ENCODE measurements at regions of chr17 and their contacts with region 1.

Region 1: DNA sequence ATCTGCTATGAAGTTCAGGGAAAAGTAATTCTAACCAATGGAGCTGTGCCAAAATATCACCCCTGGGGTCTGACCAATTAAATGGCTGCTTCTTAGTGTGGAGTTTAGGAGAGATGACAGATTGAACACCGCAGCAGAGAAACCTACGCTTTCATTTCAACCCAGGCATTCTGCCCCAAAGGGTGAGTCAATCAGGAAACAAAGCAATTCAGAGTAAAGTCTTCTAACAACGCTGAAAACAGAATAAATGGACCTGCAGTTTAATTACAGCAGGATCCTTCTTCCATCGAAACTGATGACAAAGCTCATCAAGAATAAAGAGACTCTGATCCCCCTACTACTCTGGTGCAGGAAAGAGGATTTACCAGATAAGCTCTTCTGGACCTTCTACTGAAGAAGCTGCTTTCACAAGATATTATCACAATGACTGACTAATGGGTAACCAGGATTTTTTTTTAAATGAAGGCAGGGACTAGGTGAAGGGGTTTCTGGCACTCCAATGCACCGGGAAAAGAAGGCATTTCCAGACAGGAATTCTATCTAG is 16.7 kb downstream of the RFFL start:
- DNase-seq: peak; percentile 82
- H3K4me3 Mint-ChIP-seq: peak overlapping the region; percentile 72
- H3K27ac Mint-ChIP-seq: peak overlapping the region; percentile 94
- H3K4me1 Mint-ChIP-seq: peaks cover 69% of the 10 kb centered on the region
- H3K27me3 Mint-ChIP-seq: no peaks in the 10 kb centered on the region

Region 2: GRCh38 chr17:35022536-35023063 is 24.2 kb before region 1 on chr17:
- CTCF ChIA-PET with region 1: interaction called, 7 read pairs
- POLR2A ChIA-PET with region 1: interaction called, 23 read pairs
- intact Hi-C with region 1: loop called (anchors 1 kb)
- DNase-seq: peak; percentile 90
- H3K4me3 Mint-ChIP-seq: peak overlapping the region; percentile 81
- H3K27ac Mint-ChIP-seq: peak overlapping the region; percentile 100
- H3K4me1 Mint-ChIP-seq: peaks cover 46% of the 10 kb centered on the region
- H3K27me3 Mint-ChIP-seq: no peaks in the 10 kb centered on the region

Region 3: DNA sequence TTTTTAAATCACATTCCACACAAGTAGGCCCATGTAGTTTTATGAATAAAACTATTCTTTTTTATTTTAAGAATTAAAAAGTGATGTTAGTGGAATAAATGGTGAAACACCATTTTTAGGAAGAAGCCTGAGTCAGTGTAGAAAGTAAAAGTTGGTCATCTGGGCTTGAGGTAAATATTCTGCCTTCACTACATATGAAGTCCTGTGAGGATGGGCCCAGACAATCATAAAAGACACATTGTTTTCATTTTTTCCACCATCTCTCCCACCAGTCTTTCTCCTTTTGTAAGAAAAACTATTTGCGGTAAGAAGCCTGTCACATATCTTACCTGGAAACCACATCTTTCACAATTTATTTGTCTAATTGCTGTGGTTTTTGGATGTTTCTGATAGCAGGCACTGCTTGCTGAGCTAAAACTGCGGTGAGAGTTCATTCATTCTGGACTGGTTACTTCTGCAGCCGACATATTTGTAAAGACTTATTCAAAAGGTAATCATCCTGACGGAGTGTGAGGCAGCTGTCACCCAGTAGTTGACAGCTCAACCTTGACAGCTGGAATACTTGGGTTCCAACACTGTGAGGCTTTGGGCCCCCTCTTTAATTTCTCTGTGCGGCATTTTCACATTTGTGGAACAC is 27.3 kb after region 1 on chr17:
- CTCF ChIA-PET with region 1: interaction called, 6 read pairs
- POLR2A ChIA-PET with region 1: interaction called, 11 read pairs
- intact Hi-C with region 1: loop called (anchors 1 kb)
- DNase-seq: peak; percentile 35
- H3K4me3 Mint-ChIP-seq: peak overlapping the region; percentile 44
- H3K27ac Mint-ChIP-seq: peak overlapping the region; percentile 85
- H3K4me1 Mint-ChIP-seq: peaks cover 69% of the 10 kb centered on the region
- H3K27me3 Mint-ChIP-seq: no peaks in the 10 kb centered on the region